ENCODE measurements at regions of chr14 and their contacts with region 1.

Region 1: DNA sequence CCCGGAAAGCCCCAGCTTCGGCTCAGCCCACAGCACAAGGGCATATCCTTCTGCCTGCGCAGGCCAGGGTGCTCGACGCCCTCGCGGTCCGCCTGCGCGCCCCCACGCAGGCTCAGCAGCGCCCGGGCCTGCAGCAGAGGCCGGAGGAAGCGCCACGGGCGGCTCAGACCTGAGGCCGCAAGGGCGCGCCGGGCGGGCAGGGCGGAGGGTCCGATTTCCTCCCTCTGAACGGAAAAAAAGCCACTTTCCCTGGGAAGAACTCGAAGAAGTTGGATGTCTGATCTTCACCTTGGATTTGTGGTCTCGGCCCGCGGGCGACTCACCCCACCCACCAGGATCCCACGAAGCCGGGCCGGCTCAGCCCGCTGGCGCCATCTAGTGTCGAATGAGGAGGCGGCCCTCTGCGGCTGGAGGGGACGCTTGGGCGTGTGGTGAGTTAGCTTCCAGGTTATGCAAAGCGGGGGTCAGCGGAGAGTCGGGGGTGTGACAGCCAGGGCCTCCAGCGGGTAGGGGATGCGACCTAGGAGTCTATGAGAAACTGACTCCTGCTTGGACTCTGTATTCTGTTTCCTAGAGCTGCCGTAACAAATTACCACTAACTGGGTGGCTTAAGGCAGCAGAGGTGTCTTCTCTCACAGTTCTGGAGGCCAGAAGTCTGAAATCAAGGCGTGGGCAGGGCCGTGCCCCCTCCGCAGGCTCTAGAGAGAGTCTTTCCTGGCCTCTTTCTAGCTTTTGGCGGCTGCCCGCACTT is 40.0 kb upstream of the SRSF5 start:
- DNase-seq: peak; percentile 85
- H3K4me3 ChIP-seq: peak overlapping the region; percentile 62
- H3K27ac ChIP-seq: peak overlapping the region; percentile 76
- H3K4me1 ChIP-seq: peaks cover 27% of the 10 kb centered on the region
- H3K27me3 ChIP-seq: no peaks in the 10 kb centered on the region
- CTCF ChIP-seq: peak; percentile 99

Region 2: DNA sequence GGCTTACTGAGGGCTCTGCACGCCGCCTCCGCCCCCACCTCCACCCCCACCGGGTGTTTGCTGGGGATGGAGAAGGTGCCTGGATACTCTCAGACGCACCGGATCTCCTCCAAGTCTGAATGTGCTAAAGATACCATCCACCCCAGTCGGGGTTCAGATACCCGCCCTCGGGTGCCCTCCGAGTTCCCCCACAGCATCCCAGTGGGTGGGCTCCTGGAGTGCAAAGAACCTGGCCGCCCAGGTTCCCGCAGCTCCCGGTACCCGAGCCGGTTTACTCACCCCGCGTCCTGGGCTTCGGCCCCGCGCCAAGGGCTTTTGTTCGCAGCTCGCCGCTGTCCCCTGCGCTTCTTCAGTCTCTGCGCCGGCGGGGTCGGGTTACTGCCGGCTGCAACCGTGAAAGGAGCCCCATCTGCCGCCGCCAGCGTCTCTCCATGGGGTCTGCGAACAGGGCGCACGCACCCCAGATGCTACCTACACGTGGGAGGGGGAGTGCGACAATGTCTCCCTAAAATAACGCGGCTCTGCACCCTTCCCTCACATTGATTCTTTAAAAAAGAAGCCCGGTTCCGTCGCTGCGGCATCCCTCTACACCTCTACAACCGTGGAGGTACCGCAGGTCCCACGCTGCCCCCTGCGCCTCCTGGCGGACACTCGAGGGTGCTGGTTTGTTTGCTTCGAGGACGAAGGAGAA is 152.5 kb before region 1 on chr14 and contains the start of gene CCDC177:
- intact Hi-C with region 1: no loop called
- DNase-seq: no peak
- H3K4me3 ChIP-seq: peak within 1 kb of the TSS; percentile 66
- H3K27ac ChIP-seq: no peak within 1 kb of the TSS
- H3K4me1 ChIP-seq: peaks cover 36% of the 10 kb centered on the region
- H3K27me3 ChIP-seq: peaks cover 97% of the 10 kb centered on the region
- CTCF ChIP-seq: peak; percentile 87
- total RNA-seq, gene CCDC177: not detected

Region 3: DNA sequence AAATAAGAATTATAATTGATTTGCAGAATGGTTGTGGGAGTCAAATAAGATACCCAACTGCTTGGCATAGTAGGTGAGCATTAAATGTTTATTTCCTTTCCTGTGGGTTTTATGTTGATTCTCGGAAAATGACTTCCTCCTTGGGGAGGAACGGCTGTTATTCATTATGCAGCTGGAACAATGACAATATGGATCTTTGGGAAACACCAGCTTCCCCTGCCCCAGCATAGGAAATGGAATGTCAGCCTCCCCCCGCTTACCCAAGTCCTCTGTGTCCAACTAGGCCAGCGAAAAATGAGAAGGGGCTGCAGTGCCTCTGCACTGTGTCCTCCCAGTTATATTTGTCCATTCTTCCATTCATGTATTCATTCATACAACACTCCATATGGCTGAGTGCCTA is 140.5 kb before region 1 on chr14:
- intact Hi-C with region 1: loop called (anchors 5 kb)
- DNase-seq: no peak
- H3K4me3 ChIP-seq: no peak overlapping the region
- H3K27ac ChIP-seq: peak overlapping the region; percentile 19
- H3K4me1 ChIP-seq: peaks cover 28% of the 10 kb centered on the region
- H3K27me3 ChIP-seq: no peaks in the 10 kb centered on the region
- CTCF ChIP-seq: no peak

Region 4: GRCh38 chr14:69600304-69600891 is 126.5 kb before region 1 on chr14:
- intact Hi-C with region 1: loop called (anchors 5 kb)
- DNase-seq: no peak
- H3K4me3 ChIP-seq: no peak overlapping the region
- H3K27ac ChIP-seq: no peak overlapping the region
- H3K4me1 ChIP-seq: no peaks in the 10 kb centered on the region
- H3K27me3 ChIP-seq: no peaks in the 10 kb centered on the region
- CTCF ChIP-seq: no peak